Mammary epithelial cell (primary cell): ENCODE measurements at regions of chr15 and their contacts with region 1.

Region 1: DNA sequence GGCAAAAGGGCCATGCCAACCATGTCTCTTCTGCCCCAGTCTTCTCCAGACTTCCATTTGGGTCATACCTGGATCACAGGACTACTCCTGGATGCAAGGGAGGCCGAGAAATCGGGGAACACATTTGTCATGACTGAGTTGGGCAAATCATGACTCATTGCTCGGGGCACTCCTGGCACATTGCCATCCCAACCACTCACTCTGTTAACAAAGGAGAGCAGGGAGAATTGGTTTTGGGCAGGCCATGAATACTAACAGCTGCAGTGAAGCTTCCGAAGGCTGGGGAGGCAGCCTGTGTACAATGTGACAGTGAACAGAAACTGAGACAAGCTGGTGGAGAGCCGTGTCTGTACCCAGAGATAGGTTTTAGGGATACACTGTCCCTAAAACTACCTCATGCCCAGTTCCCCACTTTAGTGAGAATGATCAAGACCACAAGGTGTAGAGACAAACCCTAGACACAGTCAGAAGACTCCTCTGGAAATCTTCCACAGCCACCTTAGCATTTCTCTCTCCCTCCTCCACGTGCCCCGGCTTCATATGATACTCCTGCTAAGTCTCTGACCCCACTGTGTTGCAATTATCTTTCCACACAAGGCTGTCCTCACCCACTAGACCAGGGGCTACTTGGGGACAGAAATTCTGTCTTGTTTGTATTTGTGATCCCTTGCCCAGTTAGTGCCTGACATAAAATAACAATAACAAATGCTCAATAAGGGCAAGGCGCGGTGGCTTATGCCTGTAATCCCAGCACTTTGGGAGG is 10.5 kb upstream of the BUB1B start:
- DNase-seq: peak; percentile 97
- H3K4me3 ChIP-seq: no peak overlapping the region
- H3K27ac ChIP-seq: peak overlapping the region; percentile 35
- H3K4me1 ChIP-seq: peaks cover 49% of the 10 kb centered on the region
- H3K27me3 ChIP-seq: no peaks in the 10 kb centered on the region
- CTCF ChIP-seq: no peak

Region 2: GRCh38 chr15:40098489-40099261 is 51.7 kb before region 1 on chr15:
- CTCF ChIA-PET with region 1: no interaction called
- dilution Hi-C with region 1: loop called (anchors 5 kb)
- in situ Hi-C with region 1: loop called in 1 of 2 experiments (anchors 10 kb)
- intact Hi-C with region 1: no loop called
- DNase-seq: peak; percentile 61
- H3K4me3 ChIP-seq: no peak overlapping the region
- H3K27ac ChIP-seq: no peak overlapping the region
- H3K4me1 ChIP-seq: peaks cover 14% of the 10 kb centered on the region
- H3K27me3 ChIP-seq: no peaks in the 10 kb centered on the region
- CTCF ChIP-seq: no peak

Region 3: GRCh38 chr15:40204100-40204499 is 53.8 kb after region 1 on chr15:
- CTCF ChIA-PET with region 1: no interaction called
- dilution Hi-C with region 1: loop called (anchors 5 kb)
- in situ Hi-C with region 1: no loop called
- intact Hi-C with region 1: no loop called
- DNase-seq: no peak
- H3K4me3 ChIP-seq: no peak overlapping the region
- H3K27ac ChIP-seq: no peak overlapping the region
- H3K4me1 ChIP-seq: no peaks in the 10 kb centered on the region
- H3K27me3 ChIP-seq: no peaks in the 10 kb centered on the region
- CTCF ChIP-seq: no peak